Breast epithelium (tissue), 4 donors: ENCODE measurements at regions of chr13 and their contacts with region 1.

Region 1: GRCh38 chr13:98853771-98854221 is 101.3 kb upstream of the SLC15A1 start:
- DNase-seq: no peak
- H3K4me3 ChIP-seq: no peak overlapping the region
- H3K27ac ChIP-seq: no peak overlapping the region
- H3K4me1 ChIP-seq: no peaks in the 10 kb centered on the region
- H3K27me3 ChIP-seq: no peaks in the 10 kb centered on the region
- CTCF ChIP-seq: no peak
- POLR2A ChIP-seq: no peak

Region 2: DNA sequence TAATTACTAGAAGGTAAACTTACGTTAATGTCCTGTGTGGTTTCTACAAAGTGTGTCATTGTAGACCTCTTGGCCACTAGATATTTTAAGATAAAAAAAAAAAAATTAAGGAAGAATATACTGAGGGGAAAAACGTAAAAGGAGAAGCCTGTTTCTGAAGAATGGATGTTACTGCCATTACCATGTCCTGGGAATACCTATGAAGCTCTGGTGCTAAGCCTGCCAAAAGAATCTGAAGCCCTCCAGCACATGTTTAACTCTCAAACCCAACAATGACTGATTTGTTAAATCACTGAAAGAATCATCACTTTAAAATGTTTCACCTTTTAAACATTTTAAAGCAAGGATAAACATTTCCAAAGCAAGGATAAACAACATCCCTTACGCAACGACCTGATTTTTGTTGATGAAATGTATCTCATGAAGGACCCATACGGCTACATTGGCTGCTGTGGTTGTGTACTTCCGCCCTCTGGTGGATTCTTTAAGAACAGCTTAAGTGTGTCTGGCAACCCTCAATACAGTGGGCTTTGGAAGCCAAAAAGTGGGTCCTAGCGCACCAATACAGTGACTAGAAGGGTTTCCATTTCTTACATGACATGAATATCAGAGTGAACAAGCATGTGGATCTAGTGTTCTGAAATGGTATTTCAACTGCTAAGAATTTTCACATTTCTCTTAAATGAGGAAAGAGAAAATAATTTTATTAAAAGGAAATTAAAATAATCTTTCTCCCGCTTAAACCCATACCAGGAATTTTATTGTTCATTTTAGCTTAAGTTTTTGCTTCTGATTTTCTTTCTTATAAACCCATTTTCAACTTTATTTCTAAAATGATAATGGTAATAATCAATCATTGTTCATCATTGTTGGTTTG is 1494.4 kb before region 1 on chr13:
- intact Hi-C with region 1: loop called (anchors 5 kb)
- DNase-seq: peak in 1 of 2 donors; percentile 48
- H3K4me3 ChIP-seq: no peak overlapping the region
- H3K27ac ChIP-seq: peak overlapping the region; percentile 11 to 40
- H3K4me1 ChIP-seq: no peaks in the 10 kb centered on the region
- H3K27me3 ChIP-seq: no peaks in the 10 kb centered on the region
- CTCF ChIP-seq: peak; percentile 85 to 90 (median 86)
- POLR2A ChIP-seq: no peak

Region 3: DNA sequence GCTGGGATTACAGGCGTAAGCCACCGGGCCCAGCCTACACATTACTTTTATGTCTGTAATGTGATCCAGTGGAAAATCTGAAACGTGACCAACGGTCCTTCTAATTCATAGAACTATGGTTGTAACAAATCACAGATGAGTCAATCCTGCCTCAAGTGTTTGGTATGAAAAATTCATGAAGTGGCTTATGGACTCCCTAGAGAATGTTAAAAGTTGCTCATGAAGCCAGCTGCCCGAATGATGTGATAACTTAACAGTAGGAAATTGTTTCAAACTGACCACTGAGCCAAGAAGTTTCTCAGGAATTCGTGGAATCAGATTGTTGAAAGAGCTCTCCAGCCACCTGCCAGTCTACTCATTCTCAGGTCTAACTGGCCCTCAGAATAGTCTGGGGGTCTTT is 770.3 kb before region 1 on chr13:
- intact Hi-C with region 1: no loop called
- DNase-seq: no peak
- H3K4me3 ChIP-seq: no peak overlapping the region
- H3K27ac ChIP-seq: no peak overlapping the region
- H3K4me1 ChIP-seq: no peaks in the 10 kb centered on the region
- H3K27me3 ChIP-seq: no peaks in the 10 kb centered on the region
- CTCF ChIP-seq: no peak
- POLR2A ChIP-seq: no peak

Region 4: GRCh38 chr13:98816406-98816805 is 37.4 kb before region 1 on chr13:
- intact Hi-C with region 1: loop called (anchors 2 kb)
- DNase-seq: no peak
- H3K4me3 ChIP-seq: no peak overlapping the region
- H3K27ac ChIP-seq: no peak overlapping the region
- H3K4me1 ChIP-seq: no peaks in the 10 kb centered on the region
- H3K27me3 ChIP-seq: no peaks in the 10 kb centered on the region
- CTCF ChIP-seq: no peak
- POLR2A ChIP-seq: no peak